Heart right ventricle (tissue), 16 donors: ENCODE measurements at regions of chr12 and their contacts with region 1.

Region 1: DNA sequence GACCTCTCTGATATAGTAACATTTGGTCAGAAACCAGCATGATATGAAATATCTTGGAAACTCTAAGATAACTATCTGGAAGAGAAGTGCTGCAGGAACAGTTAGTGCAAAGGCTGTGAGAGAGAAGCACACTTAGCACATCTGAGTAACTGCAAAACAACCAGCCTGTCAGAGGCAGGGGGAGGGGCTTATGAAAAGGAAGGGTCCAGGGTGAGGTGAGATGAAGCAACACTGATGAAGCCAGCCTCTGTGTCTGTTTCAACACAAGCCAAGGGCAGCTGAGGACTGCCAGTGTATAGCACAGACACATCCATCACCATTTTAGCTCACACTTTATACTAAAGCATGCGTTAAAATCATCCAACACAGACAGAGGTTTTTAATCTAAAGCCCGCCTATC is 37.4 kb upstream of the OVCH1 start:
- DNase-seq: no peak
- ATAC-seq: peak in 1 of 8 donors; percentile 44
- H3K4me3 ChIP-seq: no peak overlapping the region
- H3K27ac ChIP-seq: no peak overlapping the region
- H3K4me1 ChIP-seq: no peaks in the 10 kb centered on the region
- H3K27me3 ChIP-seq: no peaks in the 10 kb centered on the region
- CTCF ChIP-seq: no peak

Region 2: DNA sequence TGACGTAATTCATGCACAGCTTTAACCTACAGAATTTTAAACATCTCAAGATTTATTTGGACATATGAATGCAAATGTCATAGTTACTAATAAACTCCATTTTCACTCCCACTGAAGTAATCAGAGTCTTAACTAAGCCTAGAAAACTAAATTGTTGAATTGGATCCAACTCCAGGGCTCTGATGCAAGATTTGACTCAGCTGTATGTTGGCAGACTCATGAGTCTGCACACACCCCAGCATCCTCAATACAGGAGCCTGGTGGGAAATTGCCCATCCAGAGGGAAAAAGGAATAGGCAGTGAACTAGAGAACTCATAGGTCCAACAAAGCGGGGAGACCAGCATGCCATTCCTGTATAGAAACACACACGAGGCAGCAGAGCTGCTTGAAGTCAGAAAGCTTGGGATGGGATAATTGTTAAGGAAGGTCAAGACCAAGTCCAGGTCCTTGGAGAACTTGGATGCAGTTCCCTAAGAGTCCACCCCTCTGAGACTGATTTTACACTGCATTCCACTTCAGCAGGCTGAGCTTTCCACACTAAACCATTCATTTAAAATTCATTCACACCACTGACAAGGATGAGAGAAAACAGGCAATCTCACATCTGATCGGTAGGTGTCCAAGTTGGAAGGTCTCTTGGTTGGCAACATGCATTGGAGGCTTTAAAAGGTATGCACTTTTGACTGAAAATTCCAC is 234.4 kb after region 1 on chr12:
- intact Hi-C with region 1: no loop called
- DNase-seq: no peak
- ATAC-seq: peak; percentile 33 to 94 (median 62)
- H3K4me3 ChIP-seq: no peak overlapping the region
- H3K27ac ChIP-seq: no peak overlapping the region
- H3K4me1 ChIP-seq: peaks cover 0 to 45% (median 23%) of the 10 kb centered on the region in 9 donors
- H3K27me3 ChIP-seq: no peaks in the 10 kb centered on the region
- CTCF ChIP-seq: no peak

Region 3: DNA sequence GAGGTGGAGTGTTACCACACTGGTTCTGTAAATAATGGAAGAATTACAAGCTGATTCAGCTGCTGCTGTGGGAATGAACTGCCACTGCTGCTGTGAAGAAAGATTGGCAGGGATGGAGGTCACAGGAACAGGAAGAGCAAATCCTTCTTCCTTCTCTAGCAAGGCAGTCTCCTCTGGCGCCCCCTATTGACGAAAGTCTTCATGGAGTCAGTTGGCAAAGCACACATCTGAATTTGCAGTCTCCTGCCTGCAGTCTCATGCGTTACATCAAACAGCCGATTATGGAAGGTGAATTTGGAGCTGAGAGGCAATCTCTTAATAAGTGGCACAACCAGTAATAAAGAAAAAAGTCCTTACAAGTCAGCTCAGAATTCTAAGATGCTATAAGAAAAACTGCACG is 354.8 kb after region 1 on chr12:
- intact Hi-C with region 1: loop called in 2 of 10 experiments (anchors 10 kb)
- DNase-seq: peak in 1 of 2 donors; percentile 75
- ATAC-seq: peak in 2 of 8 donors; percentile 41 to 48
- H3K4me3 ChIP-seq: no peak overlapping the region
- H3K27ac ChIP-seq: no peak overlapping the region
- H3K4me1 ChIP-seq: no peaks in the 10 kb centered on the region
- H3K27me3 ChIP-seq: no peaks in the 10 kb centered on the region
- CTCF ChIP-seq: peak; percentile 35 to 72 (median 62)